Dorsolateral prefrontal cortex (tissue), 120 donors: ENCODE measurements at regions of chr4 and their contacts with region 1.

Region 1: GRCh38 chr4:56907489-56908205 is at the start of gene REST:
- DNase-seq: peak in 9 of 10 donors; percentile 8 to 75 (median 46)
- H3K4me3 ChIP-seq: peak within 1 kb of the TSS; percentile 54 to 88 (median 76)
- H3K27ac ChIP-seq: peak within 1 kb of the TSS in 55 of 59 donors; percentile 5 to 92 (median 84)
- H3K27me3 ChIP-seq: peaks cover 0 to 40% (median 9%) of the 10 kb centered on the region in 45 donors
- CTCF ChIP-seq: peak in 5 of 56 donors; percentile 7 to 24 (median 17)
- total RNA-seq, gene REST: 7.2 to 25.5 (median 13.1) TPM

Region 2: DNA sequence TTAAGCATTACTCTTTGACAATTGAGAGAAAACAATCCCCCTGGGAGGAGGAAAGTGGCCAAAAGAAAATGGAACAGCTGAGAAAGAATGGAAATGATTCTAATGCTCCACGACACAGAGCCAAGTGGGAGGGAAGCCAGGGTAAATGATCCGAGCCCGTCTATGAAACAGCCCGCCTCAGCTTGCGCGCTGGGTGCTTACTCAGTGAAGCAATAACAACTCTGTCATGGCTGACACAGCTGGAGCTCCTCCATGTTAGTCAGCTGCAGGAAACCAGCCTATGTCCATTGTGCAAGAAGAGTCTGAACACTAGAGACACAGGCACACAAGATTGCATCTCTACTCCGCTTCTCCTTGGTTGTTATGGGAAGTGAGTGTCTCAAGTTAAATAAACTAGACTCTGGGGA is 50.5 kb after region 1 on chr4:
- intact Hi-C with region 1: loop called (anchors 5 kb)
- DNase-seq: peak in 8 of 10 donors; percentile 12 to 87 (median 72)
- H3K4me3 ChIP-seq: peak overlapping the region in 45 of 59 donors; percentile 0 to 51 (median 30)
- H3K27ac ChIP-seq: peak overlapping the region in 52 of 59 donors; percentile 0 to 87 (median 66)
- H3K27me3 ChIP-seq: no peaks in the 10 kb centered on the region
- CTCF ChIP-seq: peak in 2 of 56 donors; percentile 10 to 28

Region 3: GRCh38 chr4:56977321-56978012 is 69.8 kb after region 1 on chr4 and contains the start of gene NOA1:
- intact Hi-C with region 1: loop called (anchors 1 to 2 kb)
- DNase-seq: peak; percentile 92 to 98 (median 96)
- H3K4me3 ChIP-seq: peak within 1 kb of the TSS; percentile 67 to 100 (median 93)
- H3K27ac ChIP-seq: peak within 1 kb of the TSS; percentile 18 to 96 (median 88)
- H3K27me3 ChIP-seq: no peaks in the 10 kb centered on the region
- CTCF ChIP-seq: peak in 22 of 56 donors; percentile 7 to 44 (median 23)
- total RNA-seq, gene NOA1: 7.5 to 14.3 (median 11.1) TPM

Region 4: DNA sequence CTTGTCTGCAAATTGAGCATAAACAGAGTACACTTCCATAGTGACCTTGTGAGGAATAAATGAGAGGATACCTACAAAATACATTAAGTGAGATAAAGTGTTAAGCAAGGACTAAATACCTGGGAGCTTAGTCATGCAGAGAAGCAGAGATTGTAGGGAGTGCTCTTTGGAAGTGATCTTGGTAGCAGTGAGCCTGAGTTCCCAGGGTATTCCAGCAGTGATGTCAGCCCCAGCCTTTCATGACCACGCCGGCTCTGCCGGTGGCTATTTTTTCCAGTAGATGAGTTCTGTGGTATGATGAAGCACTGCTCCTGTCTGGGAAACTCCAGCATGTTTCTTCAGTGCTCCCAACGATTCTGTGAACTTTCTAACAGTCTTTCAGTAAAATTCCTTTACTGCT is 594.1 kb after region 1 on chr4:
- intact Hi-C with region 1: no loop called
- DNase-seq: peak in 2 of 10 donors; percentile 22 to 53
- H3K4me3 ChIP-seq: no peak overlapping the region
- H3K27ac ChIP-seq: no peak overlapping the region
- H3K27me3 ChIP-seq: peaks cover 0 to 4% (median 0%) of the 10 kb centered on the region in 45 donors
- CTCF ChIP-seq: no peak